ENCODE measurements at regions of chr1 and their contacts with region 1.

Region 1: DNA sequence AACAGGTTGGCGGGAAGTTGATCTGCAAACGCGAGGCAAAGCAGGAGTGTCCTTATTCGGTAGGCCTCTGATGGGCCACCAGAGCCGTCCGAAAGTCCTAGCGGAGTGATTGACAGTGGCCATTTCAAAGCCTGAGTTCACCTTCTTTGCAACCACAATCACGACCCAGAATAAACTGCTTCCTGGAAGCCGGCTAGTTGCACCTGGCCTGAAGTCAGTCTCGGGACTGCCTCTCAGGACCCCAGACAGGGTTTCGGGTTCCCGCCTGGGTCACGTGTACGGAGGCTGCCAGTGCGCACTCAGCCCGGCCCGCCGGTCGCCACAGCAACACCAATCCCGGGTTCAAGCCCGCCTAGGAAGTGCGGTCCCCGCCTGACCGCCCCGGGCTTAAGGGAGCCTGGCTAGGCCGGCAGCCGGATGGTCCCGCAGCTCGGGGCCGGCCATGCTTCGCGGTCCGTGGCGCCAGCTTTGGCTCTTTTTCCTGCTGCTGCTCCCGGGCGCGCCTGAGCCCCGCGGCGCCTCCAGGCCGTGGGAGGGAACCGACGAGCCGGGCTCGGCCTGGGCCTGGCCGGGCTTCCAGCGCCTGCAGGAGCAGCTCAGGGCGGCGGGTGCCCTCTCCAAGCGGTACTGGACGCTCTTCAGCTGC is at the start of gene TOR3A:
- DNase-seq: peak; percentile 83 to 88
- ATAC-seq: peak; percentile 81 to 92
- H3K4me3 ChIP-seq: peak within 1 kb of the TSS; percentile 77
- H3K27ac ChIP-seq: peak within 1 kb of the TSS; percentile 87 to 95
- H3K4me1 ChIP-seq: peaks cover 23% of the 10 kb centered on the region; the same call in 1 of the 3 replicates
- CTCF ChIP-seq: no peak
- EP300 ChIP-seq: no peak
- POLR2A ChIP-seq: peak; percentile 88
- RAD21 ChIP-seq: no peak
- polyA plus RNA-seq, gene TOR3A: 30.7 and 41.0 TPM in 2 replicates

Region 2: GRCh38 chr1:178532392-178532791 is 549.4 kb before region 1 on chr1:
- CTCF ChIA-PET with region 1: interaction called, 28 read pairs
- POLR2A ChIA-PET with region 1: no interaction called
- DNase-seq: peak; percentile 80 to 94
- ATAC-seq: peak; percentile 71 to 90
- H3K4me3 ChIP-seq: no peak overlapping the region
- H3K27ac ChIP-seq: peak overlapping the region; percentile 27 to 68; a peak in 4 of 6 replicates
- H3K4me1 ChIP-seq: peaks cover 29% of the 10 kb centered on the region
- CTCF ChIP-seq: peak; percentile 92
- EP300 ChIP-seq: no peak
- POLR2A ChIP-seq: no peak
- RAD21 ChIP-seq: peak; percentile 92 to 96

Region 3: DNA sequence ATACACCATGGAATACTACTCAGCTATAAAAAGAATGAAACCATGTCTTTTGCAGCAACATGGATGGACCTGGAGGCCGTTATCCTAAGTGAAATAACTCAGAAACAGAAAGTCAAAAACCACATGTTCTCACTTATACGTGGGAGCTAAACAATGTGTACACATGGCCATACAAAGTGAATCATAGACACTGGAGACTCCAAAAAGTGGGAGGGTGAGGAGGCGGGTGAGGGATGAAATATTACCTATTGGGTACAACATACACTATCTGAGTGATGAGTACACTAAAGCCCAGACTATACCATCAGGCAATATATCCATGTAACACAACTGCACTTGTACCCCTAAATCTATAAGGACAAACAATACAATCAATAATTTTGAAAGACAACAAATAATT is 95.6 kb before region 1 on chr1:
- CTCF ChIA-PET with region 1: no interaction called
- POLR2A ChIA-PET with region 1: no interaction called
- DNase-seq: no peak
- ATAC-seq: no peak
- H3K4me3 ChIP-seq: no peak overlapping the region
- H3K27ac ChIP-seq: no peak overlapping the region
- H3K4me1 ChIP-seq: no peaks in the 10 kb centered on the region
- CTCF ChIP-seq: no peak
- EP300 ChIP-seq: no peak
- POLR2A ChIP-seq: no peak
- RAD21 ChIP-seq: no peak

Region 4: GRCh38 chr1:179043266-179043665 is 38.5 kb before region 1 on chr1:
- CTCF ChIA-PET with region 1: interaction called, 14 read pairs
- POLR2A ChIA-PET with region 1: no interaction called
- DNase-seq: no peak
- ATAC-seq: no peak
- H3K4me3 ChIP-seq: no peak overlapping the region
- H3K27ac ChIP-seq: no peak overlapping the region
- H3K4me1 ChIP-seq: peaks cover 23% of the 10 kb centered on the region
- CTCF ChIP-seq: no peak
- EP300 ChIP-seq: no peak
- POLR2A ChIP-seq: no peak
- RAD21 ChIP-seq: no peak

Region 5: GRCh38 chr1:179058487-179059483 is 23.0 kb before region 1 on chr1:
- CTCF ChIA-PET with region 1: interaction called, 16 read pairs
- POLR2A ChIA-PET with region 1: no interaction called
- DNase-seq: no peak
- ATAC-seq: peak in 1 of 2 experiments; percentile 14; a peak in 3 of 6 replicates
- H3K4me3 ChIP-seq: no peak overlapping the region
- H3K27ac ChIP-seq: peak overlapping the region; percentile 81 to 91
- H3K4me1 ChIP-seq: peaks cover 43% of the 10 kb centered on the region
- CTCF ChIP-seq: no peak
- EP300 ChIP-seq: no peak
- POLR2A ChIP-seq: no peak
- RAD21 ChIP-seq: no peak

Region 6: DNA sequence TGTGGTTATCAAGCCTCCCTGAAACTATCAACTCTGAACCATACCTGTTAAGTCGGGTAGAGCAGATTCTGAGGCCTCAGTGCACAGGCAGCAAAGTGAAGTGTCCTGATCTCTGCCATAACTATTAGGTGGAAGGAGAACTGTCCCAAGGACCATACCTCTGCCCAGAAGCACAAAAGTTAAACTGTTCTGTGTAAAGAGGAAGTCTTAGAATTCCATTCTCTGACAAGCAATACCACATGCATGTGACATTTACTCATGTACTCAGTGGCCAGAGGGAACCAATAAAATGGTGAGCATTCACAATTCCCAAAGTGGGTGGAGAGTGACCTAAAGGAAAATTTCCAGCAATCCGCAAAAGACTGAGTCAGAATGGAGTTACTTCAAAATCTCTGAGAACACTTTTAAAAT is 61.1 kb after region 1 on chr1:
- CTCF ChIA-PET with region 1: no interaction called
- POLR2A ChIA-PET with region 1: no interaction called
- DNase-seq: peak; percentile 66 to 88
- ATAC-seq: peak; percentile 94 to 97
- H3K4me3 ChIP-seq: peak overlapping the region; percentile 39
- H3K27ac ChIP-seq: peak overlapping the region; percentile 59 to 82
- H3K4me1 ChIP-seq: peaks cover 45% of the 10 kb centered on the region
- CTCF ChIP-seq: no peak
- EP300 ChIP-seq: no peak
- POLR2A ChIP-seq: no peak
- RAD21 ChIP-seq: no peak

Region 7: GRCh38 chr1:179293340-179294327 is 211.8 kb after region 1 on chr1 and contains the start of gene SOAT1:
- CTCF ChIA-PET with region 1: interaction called, 21 read pairs
- POLR2A ChIA-PET with region 1: interaction called, 5 read pairs
- DNase-seq: peak; percentile 94
- ATAC-seq: peak; percentile 96
- H3K4me3 ChIP-seq: peak within 1 kb of the TSS; percentile 76
- H3K27ac ChIP-seq: peak within 1 kb of the TSS; percentile 85 to 92
- H3K4me1 ChIP-seq: peaks cover 28% of the 10 kb centered on the region
- CTCF ChIP-seq: no peak
- EP300 ChIP-seq: no peak
- POLR2A ChIP-seq: peak; percentile 88
- RAD21 ChIP-seq: no peak
- polyA plus RNA-seq, gene SOAT1: 50.3 and 62.1 TPM in 2 replicates

Region 8: DNA sequence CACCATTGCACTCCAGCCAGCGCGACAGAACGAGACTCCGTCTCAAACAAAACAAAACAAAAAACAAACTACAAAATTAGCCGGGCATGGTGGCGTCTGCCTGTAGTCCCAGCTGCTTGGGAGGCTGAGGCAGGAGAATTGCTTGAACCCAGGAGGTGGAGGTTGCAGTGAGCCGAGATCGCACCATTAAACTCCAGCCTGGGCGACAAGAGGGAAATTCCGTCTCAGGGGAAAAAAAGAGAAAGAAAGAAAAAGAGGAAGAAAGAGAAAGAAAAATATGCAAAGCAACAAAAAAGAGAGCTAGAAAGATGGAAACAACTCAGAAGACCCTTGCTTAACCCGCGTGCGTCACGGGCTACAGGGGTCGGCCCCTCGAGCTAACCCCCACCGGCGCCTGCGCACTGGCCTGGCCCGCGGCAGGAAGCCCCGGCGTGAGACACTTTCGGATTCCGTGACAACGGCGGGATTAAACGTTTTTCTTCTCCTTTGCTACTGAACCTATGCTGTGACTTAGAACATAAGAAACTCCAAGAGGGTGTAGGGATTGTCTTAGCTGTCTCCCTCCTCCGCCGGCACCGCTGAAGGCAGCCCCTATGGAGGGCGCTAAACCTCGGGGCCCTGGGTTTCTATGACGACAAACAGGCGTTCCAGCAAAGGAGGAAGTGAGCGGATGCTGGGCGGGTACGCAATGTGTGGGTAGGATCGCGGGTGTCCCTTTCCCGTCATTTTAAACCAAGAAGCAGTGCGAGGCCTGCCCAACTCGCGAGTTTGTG is 283.7 kb after region 1 on chr1 and contains the start of gene AXDND1:
- CTCF ChIA-PET with region 1: interaction called, 18 read pairs
- POLR2A ChIA-PET with region 1: interaction called, 3 read pairs
- DNase-seq: peak; percentile 73 to 87
- ATAC-seq: peak; percentile 94 to 98
- H3K4me3 ChIP-seq: peak within 1 kb of the TSS; percentile 72
- H3K27ac ChIP-seq: peak within 1 kb of the TSS; percentile 87 to 94
- H3K4me1 ChIP-seq: 0 out of 3 replicates have a peak, but pooled peaks cover 4% of the 10 kb centered on the region
- CTCF ChIP-seq: no peak
- EP300 ChIP-seq: no peak
- POLR2A ChIP-seq: peak; percentile 34; the same call in 1 of the 2 replicates
- RAD21 ChIP-seq: no peak
- polyA plus RNA-seq, gene AXDND1: 0.56 and 0.71 TPM in 2 replicates